Natural killer cell (primary cell): ENCODE measurements at regions of chr6 and their contacts with region 1.

Region 1: GRCh38 chr6:110682460-110682853 is 132.8 kb downstream of the CDK19 start:
- DNase-seq: peak; percentile 33 to 89
- ATAC-seq: peak; percentile 96 to 99 (median 99)
- H3K4me3 ChIP-seq: no peak overlapping the region
- H3K4me3 Mint-ChIP-seq: no peak overlapping the region
- H3K27ac ChIP-seq: no peak overlapping the region
- H3K27ac Mint-ChIP-seq: peak overlapping the region; percentile 79 to 80
- H3K4me1 ChIP-seq: peaks cover 7% of the 10 kb centered on the region
- H3K4me1 Mint-ChIP-seq: peaks cover 14 to 25% of the 10 kb centered on the region in 2 donors
- H3K27me3 ChIP-seq: no peaks in the 10 kb centered on the region
- H3K27me3 Mint-ChIP-seq: no peaks in the 10 kb centered on the region
- CTCF ChIP-seq: peak; percentile 71

Region 2: DNA sequence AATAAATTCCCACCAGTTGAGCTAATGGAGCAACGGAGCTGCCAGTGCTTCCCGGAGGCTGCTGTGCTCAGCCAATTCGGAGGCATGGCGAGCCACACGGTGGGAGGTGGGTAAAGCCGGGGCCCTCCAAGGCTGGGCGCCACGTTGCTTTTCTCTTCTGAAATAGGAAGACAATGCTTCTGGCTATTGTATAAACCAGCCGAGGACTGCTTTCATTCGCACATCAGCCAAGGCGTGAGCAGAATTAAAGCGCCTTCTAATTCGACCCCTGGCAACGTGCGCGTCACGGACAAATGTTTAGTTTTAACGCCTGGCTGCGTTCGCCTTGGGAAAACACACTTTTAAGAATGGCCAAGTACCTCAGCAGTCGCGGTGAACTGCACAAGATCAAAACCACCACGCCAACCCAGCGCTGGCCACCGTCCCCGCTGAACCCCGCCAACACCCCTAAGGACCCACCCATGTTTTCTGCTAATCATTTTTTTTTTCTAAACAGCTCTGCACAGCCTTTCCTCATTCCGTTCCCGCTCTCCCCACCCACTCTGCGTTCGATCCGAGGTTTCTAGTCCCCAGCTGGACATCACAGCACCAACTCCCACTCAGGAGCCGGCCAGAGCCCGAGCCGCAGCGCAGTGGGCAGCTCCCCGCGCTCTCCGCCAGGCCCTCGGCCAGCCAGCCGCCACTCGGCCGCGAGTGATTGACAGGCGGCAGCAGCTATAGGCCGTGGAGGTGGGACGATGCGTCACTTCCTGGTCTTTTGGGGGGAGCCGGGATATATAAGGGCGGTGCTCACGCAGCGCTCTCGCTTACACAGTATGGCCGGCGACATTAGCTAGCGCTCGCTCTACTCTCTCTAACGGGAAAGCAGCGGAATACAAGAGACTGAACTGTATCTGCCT is 191.8 kb after region 1 on chr6 and contains the start of gene AMD1:
- intact Hi-C with region 1: loop called (anchors 1 kb)
- DNase-seq: peak; percentile 94 to 98
- ATAC-seq: peak; percentile 68 to 90 (median 80)
- H3K4me3 ChIP-seq: peak within 1 kb of the TSS; percentile 82
- H3K4me3 Mint-ChIP-seq: peak within 1 kb of the TSS; percentile 98
- H3K27ac ChIP-seq: peak within 1 kb of the TSS; percentile 87
- H3K27ac Mint-ChIP-seq: peak within 1 kb of the TSS; percentile 96 to 97
- H3K4me1 ChIP-seq: peaks cover 24% of the 10 kb centered on the region
- H3K4me1 Mint-ChIP-seq: peaks cover 34 to 43% of the 10 kb centered on the region in 2 donors
- H3K27me3 ChIP-seq: no peaks in the 10 kb centered on the region
- H3K27me3 Mint-ChIP-seq: no peaks in the 10 kb centered on the region
- CTCF ChIP-seq: no peak
- total RNA-seq, gene AMD1: 109 to 175 (median 113) TPM

Region 3: GRCh38 chr6:110949679-110950285 is 267.3 kb after region 1 on chr6:
- intact Hi-C with region 1: loop called (anchors 1 kb)
- DNase-seq: peak in 1 of 2 donors; percentile 62
- ATAC-seq: peak in 2 of 3 donors; percentile 32 to 34
- H3K4me3 ChIP-seq: no peak overlapping the region
- H3K4me3 Mint-ChIP-seq: no peak overlapping the region
- H3K27ac ChIP-seq: no peak overlapping the region
- H3K27ac Mint-ChIP-seq: no peak overlapping the region
- H3K4me1 ChIP-seq: no peaks in the 10 kb centered on the region
- H3K4me1 Mint-ChIP-seq: no peaks in the 10 kb centered on the region
- H3K27me3 ChIP-seq: no peaks in the 10 kb centered on the region
- H3K27me3 Mint-ChIP-seq: peaks cover 2 to 8% of the 10 kb centered on the region in 2 donors
- CTCF ChIP-seq: peak; percentile 67

Region 4: GRCh38 chr6:110999634-111000270 is 317.3 kb after region 1 on chr6:
- intact Hi-C with region 1: loop called (anchors 1 kb)
- DNase-seq: peak in 1 of 2 donors; percentile 63
- ATAC-seq: no peak
- H3K4me3 ChIP-seq: no peak overlapping the region
- H3K4me3 Mint-ChIP-seq: no peak overlapping the region
- H3K27ac ChIP-seq: no peak overlapping the region
- H3K27ac Mint-ChIP-seq: peak overlapping the region in 1 of 2 donors; percentile 15
- H3K4me1 ChIP-seq: no peaks in the 10 kb centered on the region
- H3K4me1 Mint-ChIP-seq: no peaks in the 10 kb centered on the region
- H3K27me3 ChIP-seq: no peaks in the 10 kb centered on the region
- H3K27me3 Mint-ChIP-seq: no peaks in the 10 kb centered on the region
- CTCF ChIP-seq: peak; percentile 31